ENCODE measurements at regions of chr9 and their contacts with region 1.

Region 1: DNA sequence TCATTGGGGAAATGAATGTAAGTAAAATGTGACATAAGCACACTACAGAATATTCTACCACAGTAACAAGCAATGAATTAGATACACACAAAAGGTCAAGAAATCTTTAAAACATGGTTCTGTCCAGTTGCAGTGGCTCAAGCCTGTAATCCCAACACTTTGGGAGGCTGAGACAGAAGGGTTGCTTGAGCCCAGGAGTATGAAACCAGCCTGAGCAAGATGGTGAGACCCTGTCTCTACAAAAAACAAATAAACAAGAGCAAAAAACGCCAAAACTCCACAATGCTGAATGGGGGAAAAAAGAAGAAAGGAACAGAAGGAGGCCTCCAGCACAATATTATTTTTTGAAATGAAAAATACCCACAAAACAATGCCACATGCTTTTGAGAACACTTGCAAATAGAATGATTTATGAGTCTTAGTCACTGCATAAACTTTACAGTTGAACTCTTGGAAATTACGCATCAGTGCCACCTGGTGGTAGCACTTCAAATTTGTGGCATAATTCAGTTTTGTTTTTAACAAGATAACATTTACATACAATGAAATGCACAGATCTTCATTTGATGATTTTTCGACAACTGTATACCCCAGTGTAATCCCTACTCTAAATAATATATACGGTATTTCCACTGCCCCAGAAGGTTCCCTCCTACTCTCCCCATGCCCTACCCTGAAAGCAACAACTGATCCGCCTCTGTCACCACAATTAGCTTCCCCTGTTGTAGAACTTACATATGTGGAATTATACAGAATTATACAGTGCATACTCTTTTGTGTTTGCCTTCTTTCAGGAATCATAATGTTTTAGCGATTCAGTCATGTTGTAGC is 14.4 kb upstream of the SPINK4 start:
- H3K4me3 ChIP-seq: no peak overlapping the region
- H3K27ac ChIP-seq: no peak overlapping the region
- H3K4me1 ChIP-seq: no peaks in the 10 kb centered on the region
- CTCF ChIP-seq: 0 out of 2 replicates have a peak, but pooled peaks have one; percentile 22

Region 2: GRCh38 chr9:33211695-33212393 is 13.7 kb before region 1 on chr9:
- CTCF ChIA-PET with region 1: interaction called, 15 read pairs
- POLR2A ChIA-PET with region 1: no interaction called
- H3K4me3 ChIP-seq: no peak overlapping the region
- H3K27ac ChIP-seq: no peak overlapping the region
- H3K4me1 ChIP-seq: no peaks in the 10 kb centered on the region
- CTCF ChIP-seq: no peak

Region 3: DNA sequence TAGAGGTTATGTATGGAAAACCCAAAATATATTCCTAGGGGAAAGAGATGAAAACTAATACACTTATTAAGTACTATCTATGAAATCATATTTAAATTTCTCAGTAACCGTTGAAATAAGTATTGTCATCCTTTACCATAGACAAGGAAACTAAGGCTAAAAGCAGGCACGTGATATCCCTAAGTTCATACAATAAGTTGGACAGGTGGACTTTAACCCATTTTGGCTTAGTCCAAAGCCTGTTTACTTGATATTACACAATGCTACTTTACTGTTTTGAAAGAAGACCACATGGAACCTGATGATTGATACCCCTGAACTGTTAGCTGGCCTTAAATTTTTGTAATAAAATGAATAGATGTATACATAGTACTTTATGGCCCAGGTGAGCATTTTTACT is 68.2 kb after region 1 on chr9:
- CTCF ChIA-PET with region 1: no interaction called
- POLR2A ChIA-PET with region 1: no interaction called
- H3K4me3 ChIP-seq: no peak overlapping the region
- H3K27ac ChIP-seq: no peak overlapping the region
- H3K4me1 ChIP-seq: no peaks in the 10 kb centered on the region
- CTCF ChIP-seq: no peak